ENCODE measurements at regions of chr6 and their contacts with region 1.

Region 1: DNA sequence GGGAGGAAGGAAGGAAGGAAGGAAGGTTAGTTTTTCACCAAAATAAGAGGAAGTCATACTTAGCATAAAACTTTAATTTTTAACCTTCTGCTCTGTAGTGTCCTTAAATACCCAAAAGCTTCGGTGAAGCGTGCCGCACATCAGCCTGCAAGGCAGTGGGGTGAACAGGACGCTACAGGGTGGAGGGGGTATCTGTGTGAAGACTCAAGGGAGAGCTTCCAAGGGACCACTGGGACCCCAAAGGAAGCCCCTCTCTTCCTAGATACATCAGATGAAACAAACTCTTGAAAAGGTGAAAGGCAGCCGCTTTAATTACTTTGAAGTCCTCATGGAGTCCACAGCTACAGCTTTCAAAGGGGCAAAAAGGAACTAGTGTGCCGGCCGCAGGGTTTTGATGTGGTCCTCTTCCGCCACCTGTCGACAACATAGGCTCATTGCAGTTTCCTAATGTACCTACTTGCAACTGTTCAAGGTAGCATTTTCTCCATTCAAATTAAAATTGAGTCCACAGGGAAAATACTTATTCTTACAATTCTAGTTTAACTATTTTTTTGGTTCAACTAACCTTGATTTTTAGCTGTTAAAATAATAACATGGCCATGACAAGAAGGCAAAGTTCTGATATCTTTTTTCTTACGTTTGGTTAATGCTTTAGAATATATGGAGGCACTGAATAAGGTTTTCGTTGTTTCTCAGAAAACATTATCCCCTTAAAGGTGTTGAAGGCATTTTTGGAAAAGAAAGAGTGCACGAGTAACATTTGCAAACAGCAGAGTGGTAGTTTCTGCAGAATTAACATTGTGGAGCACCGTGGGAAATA is 135.0 kb upstream of the RIPOR2 start:
- DNase-seq: peak; percentile 78
- H3K4me3 ChIP-seq: no peak overlapping the region
- H3K27ac ChIP-seq: no peak overlapping the region
- H3K4me1 ChIP-seq: no peaks in the 10 kb centered on the region
- H3K27me3 ChIP-seq: no peaks in the 10 kb centered on the region
- CTCF ChIP-seq: peak; percentile 89

Region 2: GRCh38 chr6:24855395-24856245 is 215.1 kb before region 1 on chr6:
- intact Hi-C with region 1: loop called (anchors 2 kb)
- DNase-seq: peak; percentile 57
- H3K4me3 ChIP-seq: no peak overlapping the region
- H3K27ac ChIP-seq: no peak overlapping the region
- H3K4me1 ChIP-seq: peaks cover 6% of the 10 kb centered on the region
- H3K27me3 ChIP-seq: no peaks in the 10 kb centered on the region
- CTCF ChIP-seq: peak; percentile 91

Region 3: GRCh38 chr6:24951811-24952299 is 118.9 kb before region 1 on chr6:
- intact Hi-C with region 1: no loop called
- DNase-seq: no peak
- H3K4me3 ChIP-seq: no peak overlapping the region
- H3K27ac ChIP-seq: no peak overlapping the region
- H3K4me1 ChIP-seq: no peaks in the 10 kb centered on the region
- H3K27me3 ChIP-seq: no peaks in the 10 kb centered on the region
- CTCF ChIP-seq: no peak

Region 4: GRCh38 chr6:25342802-25343201 is 272.0 kb after region 1 on chr6:
- intact Hi-C with region 1: no loop called
- DNase-seq: no peak
- H3K4me3 ChIP-seq: no peak overlapping the region
- H3K27ac ChIP-seq: no peak overlapping the region
- H3K4me1 ChIP-seq: peaks cover 3% of the 10 kb centered on the region
- H3K27me3 ChIP-seq: no peaks in the 10 kb centered on the region
- CTCF ChIP-seq: no peak